Transverse colon (tissue), 4 donors: ENCODE measurements at regions of chr22 and their contacts with region 1.

Region 1: DNA sequence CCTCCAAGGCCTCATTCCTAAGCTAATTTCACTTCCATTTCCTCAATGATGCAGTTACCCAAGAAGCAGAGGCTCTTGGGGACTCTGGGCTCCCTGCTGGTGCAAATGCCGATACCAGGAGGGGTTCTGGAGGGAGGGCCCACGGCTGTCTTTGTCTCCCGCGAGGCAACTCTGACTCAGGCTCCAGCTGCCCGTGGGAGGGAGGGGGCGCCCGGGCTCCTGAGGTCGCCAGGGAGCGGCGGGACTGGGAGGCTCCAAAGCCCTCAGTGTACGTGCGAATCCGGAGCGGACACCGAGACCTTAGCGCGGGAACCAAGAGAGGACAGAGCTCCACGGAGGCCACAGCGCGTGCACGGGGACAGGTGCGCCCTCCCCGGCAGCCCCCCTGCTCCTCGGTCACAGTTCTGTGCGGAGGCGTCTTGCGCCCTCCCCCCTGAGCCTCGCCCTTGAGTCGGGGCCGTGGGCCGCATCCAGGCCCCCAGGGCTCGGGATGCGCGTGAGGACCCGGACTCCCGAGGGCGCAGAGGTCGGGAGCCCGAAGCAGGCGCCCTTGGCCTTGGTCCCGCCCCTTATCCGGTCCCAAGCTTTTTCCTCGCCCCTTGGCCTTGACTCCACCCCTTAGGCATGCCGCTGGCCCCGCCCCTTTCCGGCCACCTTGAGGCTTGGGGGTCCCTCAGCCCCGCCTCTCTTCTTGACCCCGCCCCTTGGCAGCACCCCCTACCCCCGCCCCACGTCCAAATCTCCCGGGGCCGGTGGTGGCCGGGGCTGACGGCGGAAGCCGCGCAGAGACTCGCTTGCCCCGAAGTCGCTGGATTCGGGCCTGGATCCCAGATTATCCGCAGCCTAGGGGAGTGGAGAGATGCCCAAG is 4.7 kb upstream of the SHISA8 start:
- DNase-seq: peak; percentile 82
- H3K4me3 ChIP-seq: peak overlapping the region; percentile 34 to 58 (median 42)
- H3K27ac ChIP-seq: peak overlapping the region; percentile 51 to 64 (median 56)
- H3K4me1 ChIP-seq: peaks cover 9 to 36% (median 29%) of the 10 kb centered on the region in 4 donors
- H3K27me3 ChIP-seq: peaks cover 71% of the 10 kb centered on the region
- CTCF ChIP-seq: no peak
- EP300 ChIP-seq: no peak
- POLR2A ChIP-seq: no peak

Region 2: GRCh38 chr22:41883400-41883799 is 36.2 kb before region 1 on chr22:
- in situ Hi-C with region 1: no loop called
- intact Hi-C with region 1: loop called (anchors 5 kb)
- DNase-seq: no peak
- H3K4me3 ChIP-seq: no peak overlapping the region
- H3K27ac ChIP-seq: no peak overlapping the region
- H3K4me1 ChIP-seq: no peaks in the 10 kb centered on the region
- H3K27me3 ChIP-seq: no peaks in the 10 kb centered on the region
- CTCF ChIP-seq: no peak
- EP300 ChIP-seq: no peak
- POLR2A ChIP-seq: no peak